Activated CD8-positive, alpha-beta T cell treated with anti-CD3 and anti-CD28 coated beads for 36 hours (primary cell): ENCODE measurements at regions of chr17 and their contacts with region 1.

Region 1: GRCh38 chr17:58329035-58329809 is 627 bp upstream of the TSPOAP1 start:
- DNase-seq: peak; percentile 95
- ATAC-seq: peak; percentile 48
- H3K4me3 Mint-ChIP-seq: peak overlapping the region; percentile 81
- H3K27ac Mint-ChIP-seq: peak overlapping the region; percentile 96
- H3K4me1 Mint-ChIP-seq: peaks cover 40% of the 10 kb centered on the region
- H3K27me3 Mint-ChIP-seq: peaks cover 7% of the 10 kb centered on the region
- CTCF ChIP-seq: peak; percentile 57

Region 2: DNA sequence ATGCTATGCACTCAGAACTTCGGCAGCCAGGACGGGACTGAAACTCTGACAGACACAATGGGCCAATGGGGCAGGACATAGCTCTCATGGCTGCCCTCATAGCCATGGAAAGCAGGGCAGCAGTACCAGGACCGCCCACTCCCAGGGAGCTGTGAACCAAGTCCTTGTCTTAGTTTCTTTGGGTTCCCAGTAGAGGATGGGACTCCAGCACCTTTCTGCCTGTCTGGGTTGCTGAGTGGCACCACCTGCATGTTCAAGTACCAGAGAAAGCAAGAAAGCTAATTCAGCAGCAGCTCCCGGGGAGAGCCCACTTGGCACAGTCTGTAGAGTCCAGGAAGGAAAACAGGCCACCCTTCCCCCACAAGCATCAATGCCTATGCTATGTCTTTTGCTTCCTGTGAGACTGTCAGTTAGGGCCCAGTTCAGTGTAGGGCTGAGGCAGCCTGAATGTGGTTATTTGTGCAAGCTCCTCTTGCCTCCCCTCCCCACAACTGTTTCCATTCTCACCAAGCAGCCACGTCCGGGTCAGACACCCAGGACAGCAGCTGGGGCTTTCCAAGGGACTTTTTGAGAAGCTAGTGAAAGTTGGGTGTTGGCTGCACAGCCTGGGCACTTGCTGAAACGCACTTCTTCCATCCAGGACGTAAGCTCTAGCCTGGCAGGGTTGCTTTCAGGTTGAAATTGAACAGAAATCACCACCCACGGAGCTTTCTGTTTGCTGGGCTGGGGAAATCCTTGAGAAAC is 15.0 kb after region 1 on chr17:
- CTCF ChIA-PET with region 1: interaction called, 68 read pairs
- POLR2A ChIA-PET with region 1: interaction called, 1,558 read pairs
- intact Hi-C with region 1: loop called (anchors 1 kb)
- DNase-seq: peak; percentile 98
- ATAC-seq: peak; percentile 78
- H3K4me3 Mint-ChIP-seq: peak overlapping the region; percentile 81
- H3K27ac Mint-ChIP-seq: peak overlapping the region; percentile 96
- H3K4me1 Mint-ChIP-seq: peaks cover 53% of the 10 kb centered on the region
- H3K27me3 Mint-ChIP-seq: no peaks in the 10 kb centered on the region
- CTCF ChIP-seq: no peak